ENCODE measurements at regions of chr18 and their contacts with region 1.

Region 1: DNA sequence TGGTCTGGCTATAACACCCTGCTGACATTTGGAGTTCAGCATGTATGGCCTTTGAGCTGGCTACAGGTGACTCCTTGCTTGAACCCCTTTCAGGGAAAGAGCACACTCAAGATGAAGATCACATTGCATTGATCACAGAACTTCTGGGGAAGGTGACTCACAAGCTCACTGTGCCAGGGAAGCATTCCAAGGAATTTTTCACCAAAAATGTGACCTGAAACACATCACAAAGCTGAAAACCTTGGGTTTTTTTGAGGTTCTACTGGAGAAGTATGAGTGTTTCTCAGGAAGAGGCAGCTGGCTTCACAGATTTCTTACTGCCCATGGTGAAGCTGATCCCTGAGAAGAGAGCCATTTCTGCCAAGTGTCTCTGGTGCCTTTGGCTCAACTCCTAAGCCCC is 879.0 kb downstream of the CBLN2 start:
- DNase-seq: no peak
- H3K4me3 Mint-ChIP-seq: no peak overlapping the region
- H3K27ac Mint-ChIP-seq: no peak overlapping the region
- H3K4me1 Mint-ChIP-seq: no peaks in the 10 kb centered on the region
- H3K27me3 Mint-ChIP-seq: no peaks in the 10 kb centered on the region

Region 2: DNA sequence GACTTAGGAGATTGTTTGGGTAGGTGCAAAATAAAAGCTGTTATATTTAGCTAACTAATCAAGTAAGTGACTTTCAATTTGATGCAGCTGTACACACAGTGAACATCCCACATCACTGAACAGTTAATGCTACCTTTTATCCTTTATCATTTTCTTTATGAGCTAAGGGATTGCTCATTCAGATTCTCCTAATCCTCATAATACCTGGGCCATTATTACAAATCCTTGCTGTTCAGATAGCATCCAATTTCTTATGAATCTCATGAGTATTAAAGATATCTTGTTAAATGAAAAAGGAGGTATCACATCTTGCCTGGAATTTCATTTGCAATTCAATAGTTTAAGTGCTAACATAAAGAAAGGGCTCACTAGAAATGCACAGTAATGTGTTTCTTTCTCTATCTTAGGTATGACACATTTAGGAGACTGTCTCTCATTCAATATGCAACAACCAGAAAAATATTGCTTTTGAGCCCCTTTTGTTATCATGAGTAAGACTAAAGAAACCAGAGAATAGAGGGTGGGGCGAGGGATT is 39.5 kb before region 1 on chr18:
- intact Hi-C with region 1: no loop called
- DNase-seq: no peak
- H3K4me3 Mint-ChIP-seq: no peak overlapping the region
- H3K27ac Mint-ChIP-seq: no peak overlapping the region
- H3K4me1 Mint-ChIP-seq: no peaks in the 10 kb centered on the region
- H3K27me3 Mint-ChIP-seq: no peaks in the 10 kb centered on the region

Region 3: GRCh38 chr18:71689416-71690160 is 24.5 kb after region 1 on chr18:
- intact Hi-C with region 1: no loop called
- DNase-seq: no peak
- H3K4me3 Mint-ChIP-seq: no peak overlapping the region
- H3K27ac Mint-ChIP-seq: no peak overlapping the region
- H3K4me1 Mint-ChIP-seq: no peaks in the 10 kb centered on the region
- H3K27me3 Mint-ChIP-seq: no peaks in the 10 kb centered on the region

Region 4: DNA sequence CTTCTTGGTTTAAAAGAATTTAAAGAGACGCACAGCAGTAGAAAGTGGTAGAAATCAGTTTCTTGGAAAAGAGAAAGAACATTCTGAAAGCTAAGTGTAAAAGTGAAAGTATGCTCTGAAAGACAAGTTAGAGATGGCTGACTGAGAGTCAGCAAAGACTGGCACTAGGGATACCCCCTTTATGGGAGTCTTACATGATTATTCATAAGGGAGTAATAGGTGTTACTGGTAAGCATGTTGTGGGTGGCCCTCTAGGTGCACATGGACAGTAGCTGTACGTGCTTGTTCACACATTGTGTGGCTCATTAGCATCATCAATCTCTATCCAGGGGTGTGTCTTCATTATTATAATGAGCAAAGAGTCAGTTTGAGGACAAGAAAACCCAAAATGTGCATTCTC is 62.8 kb after region 1 on chr18:
- intact Hi-C with region 1: loop called (anchors 10 kb)
- DNase-seq: no peak
- H3K4me3 Mint-ChIP-seq: no peak overlapping the region
- H3K27ac Mint-ChIP-seq: no peak overlapping the region
- H3K4me1 Mint-ChIP-seq: no peaks in the 10 kb centered on the region
- H3K27me3 Mint-ChIP-seq: no peaks in the 10 kb centered on the region

Region 5: DNA sequence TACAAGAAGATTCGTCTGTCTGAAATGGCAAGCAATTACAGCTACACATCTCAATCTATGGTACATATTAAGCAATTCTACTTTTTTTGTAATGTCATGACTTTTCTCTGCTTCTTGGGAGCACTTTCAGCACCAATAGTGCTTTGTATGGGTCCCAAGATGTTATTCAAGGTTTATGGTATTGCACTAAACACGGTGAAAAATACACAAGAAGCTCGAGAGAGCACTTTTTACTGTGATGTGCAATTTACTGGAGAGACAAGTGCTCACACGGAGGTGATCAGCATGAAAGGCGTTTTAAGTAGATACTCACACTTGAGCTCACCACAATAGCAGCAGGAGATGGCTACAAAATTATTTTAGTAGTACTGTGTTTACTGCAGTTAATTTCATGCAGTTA is 95.4 kb after region 1 on chr18:
- intact Hi-C with region 1: no loop called
- DNase-seq: no peak
- H3K4me3 Mint-ChIP-seq: no peak overlapping the region
- H3K27ac Mint-ChIP-seq: no peak overlapping the region
- H3K4me1 Mint-ChIP-seq: no peaks in the 10 kb centered on the region
- H3K27me3 Mint-ChIP-seq: no peaks in the 10 kb centered on the region

Measured in activated CD4-positive, alpha-beta T cell treated with anti-CD3 and anti-CD28 coated beads, Interleukin-2, amount 10 ng/mL, durations not matched to agents 24 days and 14 days (primary cell).